PC-3 (cell line): ENCODE measurements at regions of chr10 and their contacts with region 1.

Region 1: GRCh38 chr10:35635576-35635975 is 6.5 kb downstream of the FZD8 start:
- DNase-seq: peak; percentile 100
- ATAC-seq: peak; percentile 21
- H3K4me3 ChIP-seq: peak overlapping the region; percentile 69
- H3K27ac ChIP-seq: peak overlapping the region; percentile 71
- H3K4me1 ChIP-seq: peaks cover 63% of the 10 kb centered on the region
- H3K27me3 ChIP-seq: no peaks in the 10 kb centered on the region
- CTCF ChIP-seq: peak; percentile 100

Region 2: DNA sequence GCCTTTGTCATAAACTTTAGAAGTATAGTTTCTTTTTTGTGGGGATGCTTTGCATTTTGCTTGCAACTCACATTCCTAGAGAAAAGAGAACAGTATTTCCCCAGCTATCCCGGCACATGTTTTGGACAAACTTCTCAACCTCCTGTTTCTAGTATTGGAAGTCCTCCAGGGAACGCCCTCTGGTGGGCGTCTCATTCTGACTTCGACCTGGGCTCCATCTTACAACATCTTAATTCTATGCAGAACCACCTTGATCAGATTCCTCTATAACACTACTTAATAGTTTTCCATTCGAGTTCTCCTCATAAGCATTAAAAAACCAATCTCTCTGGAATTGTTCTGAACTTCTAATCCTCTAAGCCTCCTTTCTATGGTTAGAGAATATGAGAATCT is 146.1 kb after region 1 on chr10:
- CTCF ChIA-PET with region 1: interaction called, 6 read pairs
- POLR2A ChIA-PET with region 1: interaction called, 19 read pairs
- intact Hi-C with region 1: loop called (anchors 1 kb)
- DNase-seq: peak; percentile 72
- ATAC-seq: no peak
- H3K4me3 ChIP-seq: no peak overlapping the region
- H3K27ac ChIP-seq: peak overlapping the region; percentile 72; the same call in 1 of the 2 replicates
- H3K4me1 ChIP-seq: peaks cover 37% of the 10 kb centered on the region
- H3K27me3 ChIP-seq: no peaks in the 10 kb centered on the region
- CTCF ChIP-seq: peak; percentile 72

Region 3: GRCh38 chr10:36126076-36126475 is 490.5 kb after region 1 on chr10:
- CTCF ChIA-PET with region 1: interaction called, 14 read pairs
- POLR2A ChIA-PET with region 1: no interaction called
- intact Hi-C with region 1: loop called (anchors 1 kb)
- DNase-seq: peak; percentile 96
- ATAC-seq: peak; percentile 98
- H3K4me3 ChIP-seq: no peak overlapping the region
- H3K27ac ChIP-seq: peak overlapping the region; percentile 55
- H3K4me1 ChIP-seq: peaks cover 24% of the 10 kb centered on the region
- H3K27me3 ChIP-seq: no peaks in the 10 kb centered on the region
- CTCF ChIP-seq: no peak

Region 4: GRCh38 chr10:36393801-36394200 is 758.2 kb after region 1 on chr10:
- CTCF ChIA-PET with region 1: no interaction called
- POLR2A ChIA-PET with region 1: no interaction called
- intact Hi-C with region 1: loop called (anchors 2 kb)
- DNase-seq: peak; percentile 99
- ATAC-seq: peak; percentile 88
- H3K4me3 ChIP-seq: no peak overlapping the region
- H3K27ac ChIP-seq: peak overlapping the region; percentile 21
- H3K4me1 ChIP-seq: peaks cover 13% of the 10 kb centered on the region
- H3K27me3 ChIP-seq: no peaks in the 10 kb centered on the region
- CTCF ChIP-seq: no peak

Region 5: DNA sequence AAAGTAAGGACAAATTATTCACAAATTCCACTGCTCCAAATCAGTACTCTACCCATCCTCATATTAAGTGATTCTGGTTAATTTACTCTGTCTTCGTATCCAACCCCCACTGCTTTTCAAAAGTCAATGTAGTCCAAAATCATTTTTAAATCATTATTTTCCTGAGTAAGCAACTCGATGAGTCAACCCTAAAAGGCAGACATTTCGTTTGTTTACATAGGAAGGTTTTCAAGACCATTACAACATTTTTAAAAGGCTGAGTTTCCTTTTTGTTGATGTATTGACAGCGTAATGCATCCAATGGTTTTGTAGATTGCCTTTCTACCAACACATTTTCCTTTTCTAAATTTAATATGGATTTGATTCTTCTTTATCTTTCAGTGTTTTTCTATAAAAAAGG is 966.8 kb after region 1 on chr10:
- CTCF ChIA-PET with region 1: interaction called, 5 read pairs
- POLR2A ChIA-PET with region 1: no interaction called
- intact Hi-C with region 1: loop called (anchors 10 kb)
- DNase-seq: peak; percentile 98
- ATAC-seq: peak; percentile 71
- H3K4me3 ChIP-seq: peak overlapping the region; percentile 2; the same call in 1 of the 2 replicates
- H3K27ac ChIP-seq: peak overlapping the region; percentile 30
- H3K4me1 ChIP-seq: peaks cover 47% of the 10 kb centered on the region
- H3K27me3 ChIP-seq: no peaks in the 10 kb centered on the region
- CTCF ChIP-seq: no peak

Region 6: DNA sequence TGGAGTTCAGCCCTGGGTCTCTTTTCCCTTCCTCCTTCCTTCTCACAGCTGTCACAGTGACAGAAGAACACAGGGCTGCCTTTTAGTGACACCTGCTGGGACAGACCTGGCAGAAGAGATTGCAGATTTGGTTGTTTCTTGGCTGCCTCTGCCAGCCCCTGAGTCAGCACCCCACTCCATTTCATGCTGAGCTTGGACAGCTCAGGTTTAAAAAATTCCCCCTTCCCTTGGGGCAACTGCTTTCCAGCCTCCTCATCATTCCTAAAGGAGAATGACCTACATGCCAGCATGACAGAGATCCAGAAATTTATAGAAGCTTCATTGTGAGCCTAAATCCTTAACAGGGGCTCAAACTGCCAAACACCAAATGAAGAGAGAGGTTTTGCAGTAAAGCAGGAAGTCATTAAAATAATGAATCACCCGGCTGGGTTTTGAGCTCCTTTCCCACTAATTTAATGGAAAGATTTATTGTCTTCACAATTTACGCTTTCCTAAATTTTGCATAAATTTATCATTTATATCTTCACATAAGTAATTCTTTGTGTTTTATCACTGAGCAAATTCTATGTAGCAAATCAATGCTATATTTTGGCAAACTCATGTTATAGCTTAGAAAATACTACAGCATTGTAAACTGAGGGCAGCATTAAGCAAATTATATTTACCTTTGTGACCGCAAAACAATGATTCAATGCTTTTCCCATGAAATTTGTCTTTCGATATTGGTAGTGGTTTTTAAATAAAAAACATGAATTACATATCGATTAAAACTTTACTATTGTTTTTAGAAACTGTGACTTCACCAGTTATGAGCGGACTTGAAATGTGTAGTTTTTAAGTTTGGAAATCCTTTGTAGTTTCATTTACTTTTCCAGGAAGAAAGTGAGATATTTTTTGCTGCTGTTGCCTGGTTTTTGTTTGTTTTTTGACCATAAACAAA is 1090.3 kb after region 1 on chr10:
- CTCF ChIA-PET with region 1: interaction called, 39 read pairs
- POLR2A ChIA-PET with region 1: interaction called, 9 read pairs
- intact Hi-C with region 1: loop called (anchors 1 kb)
- DNase-seq: peak; percentile 100
- ATAC-seq: peak; percentile 91
- H3K4me3 ChIP-seq: peak overlapping the region; percentile 49
- H3K27ac ChIP-seq: peak overlapping the region; percentile 86
- H3K4me1 ChIP-seq: peaks cover 43% of the 10 kb centered on the region
- H3K27me3 ChIP-seq: no peaks in the 10 kb centered on the region
- CTCF ChIP-seq: peak; percentile 100